ENCODE measurements at regions of chr4 and their contacts with region 1.

Region 1: GRCh38 chr4:52983563-52984303 is 121.6 kb downstream of the RASL11B start:
- DNase-seq: peak; percentile 32 to 64
- H3K4me3 ChIP-seq: no peak overlapping the region
- H3K4me1 ChIP-seq: no peaks in the 10 kb centered on the region
- H3K27me3 ChIP-seq: no peaks in the 10 kb centered on the region

Region 2: GRCh38 chr4:52234561-52235440 is 748.9 kb before region 1 on chr4:
- in situ Hi-C with region 1: loop called (anchors 25 kb)
- DNase-seq: peak; percentile 22 to 81
- H3K4me3 ChIP-seq: no peak overlapping the region
- H3K4me1 ChIP-seq: peaks cover 6% of the 10 kb centered on the region
- H3K27me3 ChIP-seq: no peaks in the 10 kb centered on the region; the same call in 1 of the 2 replicates

Region 3: GRCh38 chr4:52376132-52376704 is 607.5 kb before region 1 on chr4:
- in situ Hi-C with region 1: loop called (anchors 5 kb)
- DNase-seq: peak; percentile 52 to 63
- H3K4me3 ChIP-seq: no peak overlapping the region
- H3K4me1 ChIP-seq: no peaks in the 10 kb centered on the region
- H3K27me3 ChIP-seq: no peaks in the 10 kb centered on the region

Region 4: DNA sequence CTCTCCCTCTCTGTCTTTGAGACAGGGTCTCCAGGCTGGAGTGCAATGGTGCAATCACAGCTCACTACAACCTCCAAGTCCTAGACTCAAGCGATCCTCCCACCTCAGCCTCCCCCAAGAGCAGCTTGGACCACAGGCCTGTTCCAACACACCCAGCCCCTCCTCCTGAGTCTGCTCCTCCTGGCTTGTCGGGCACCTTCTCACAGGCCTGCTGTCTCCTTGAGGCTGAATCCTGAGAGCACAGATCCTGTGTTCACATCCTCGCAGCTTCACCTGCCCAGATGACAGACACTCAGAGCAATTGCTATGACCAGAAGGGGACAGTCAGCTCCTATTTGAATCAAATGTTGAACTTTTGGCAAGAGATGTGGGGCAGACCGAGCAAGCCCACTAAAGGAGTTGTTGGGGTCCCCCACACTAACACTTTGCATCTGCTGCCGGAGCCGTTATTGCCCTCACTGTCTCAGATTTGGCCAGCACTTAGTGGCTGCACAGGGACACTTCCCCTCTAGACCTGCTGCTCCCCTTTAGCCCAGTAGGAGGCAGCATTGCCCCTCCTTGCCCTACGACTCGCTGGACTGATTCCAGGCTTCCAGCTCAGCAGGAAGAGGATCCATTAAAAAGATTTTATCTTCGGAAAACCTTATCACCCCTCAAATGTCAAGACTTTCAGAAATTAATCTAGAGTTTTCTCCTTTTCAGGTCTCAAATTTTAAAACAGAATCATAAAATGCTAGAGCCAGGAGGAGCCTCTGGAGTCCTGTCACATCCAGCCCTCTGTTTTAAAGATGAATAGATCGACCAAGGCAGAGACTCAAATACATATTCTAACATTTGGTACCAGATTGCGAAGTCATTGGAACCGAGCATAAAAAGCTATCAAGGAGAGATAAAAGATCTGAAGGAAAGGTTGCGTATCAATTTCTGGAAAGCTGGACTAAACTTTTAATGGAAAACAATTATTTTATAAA is 438.3 kb before region 1 on chr4:
- in situ Hi-C with region 1: loop called (anchors 10 kb)
- DNase-seq: peak; percentile 64 to 88
- H3K4me3 ChIP-seq: no peak overlapping the region
- H3K4me1 ChIP-seq: peaks cover 8% of the 10 kb centered on the region
- H3K27me3 ChIP-seq: no peaks in the 10 kb centered on the region

Region 5: GRCh38 chr4:52861879-52862616 is 121.7 kb before region 1 on chr4 and contains the start of gene RASL11B:
- in situ Hi-C with region 1: no loop called
- DNase-seq: peak; percentile 58 to 89
- H3K4me3 ChIP-seq: peak within 1 kb of the TSS; percentile 47
- H3K4me1 ChIP-seq: peaks cover 2% of the 10 kb centered on the region; the same call in 1 of the 2 replicates
- H3K27me3 ChIP-seq: no peaks in the 10 kb centered on the region

Region 6: GRCh38 chr4:53221832-53222480 is 238.2 kb after region 1 on chr4:
- in situ Hi-C with region 1: no loop called
- DNase-seq: no peak
- H3K4me3 ChIP-seq: no peak overlapping the region
- H3K4me1 ChIP-seq: peaks cover 4% of the 10 kb centered on the region
- H3K27me3 ChIP-seq: no peaks in the 10 kb centered on the region

Measured in HAP-1 (cell line).